Transverse colon (tissue), 4 donors: ENCODE measurements at regions of chr20 and their contacts with region 1.

Region 1: DNA sequence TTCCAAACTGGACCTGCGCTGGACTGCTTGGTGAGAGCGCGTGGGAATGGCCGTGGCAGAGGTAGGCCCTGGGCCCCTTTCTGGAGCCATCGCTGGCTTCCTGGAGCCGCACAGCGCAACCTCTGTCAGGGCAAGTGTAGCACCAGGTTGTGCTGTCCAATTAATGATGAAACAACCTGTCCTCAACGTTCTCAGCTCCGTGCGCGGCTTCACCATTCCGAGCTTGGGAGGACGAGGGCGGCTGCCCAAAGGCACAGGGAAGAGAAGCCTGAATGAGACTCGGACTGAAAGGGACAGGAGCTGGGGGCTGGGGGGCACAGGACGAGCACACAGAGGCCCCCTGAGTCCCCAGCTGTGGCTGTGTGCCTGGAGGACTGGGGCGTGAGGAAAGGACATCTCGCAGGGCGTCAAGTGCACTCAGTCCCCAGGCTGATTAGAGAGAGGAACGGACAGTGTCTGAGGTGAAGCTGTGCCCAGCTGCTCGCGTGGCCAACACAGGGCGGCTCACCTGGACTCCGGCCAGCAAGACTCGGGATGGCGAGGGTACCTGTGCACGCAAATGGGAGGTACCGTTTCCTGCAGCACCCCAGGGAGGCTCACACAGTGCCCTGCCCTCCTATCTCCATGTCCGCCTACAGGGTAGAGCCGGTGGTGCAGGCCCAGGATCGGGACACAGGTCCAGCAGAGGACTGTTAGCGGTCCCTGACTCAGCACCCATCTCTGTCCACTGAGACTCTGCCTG is 403.3 kb downstream of the TAF4 start:
- DNase-seq: no peak
- H3K4me3 ChIP-seq: no peak overlapping the region
- H3K27ac ChIP-seq: no peak overlapping the region
- H3K4me1 ChIP-seq: no peaks in the 10 kb centered on the region
- H3K27me3 ChIP-seq: no peaks in the 10 kb centered on the region
- CTCF ChIP-seq: no peak
- EP300 ChIP-seq: no peak
- POLR2A ChIP-seq: no peak

Region 2: GRCh38 chr20:61608041-61608835 is 54.2 kb before region 1 on chr20:
- in situ Hi-C with region 1: loop called in 1 of 4 experiments (anchors 10 kb)
- intact Hi-C with region 1: no loop called
- DNase-seq: no peak
- H3K4me3 ChIP-seq: no peak overlapping the region
- H3K27ac ChIP-seq: no peak overlapping the region
- H3K4me1 ChIP-seq: no peaks in the 10 kb centered on the region
- H3K27me3 ChIP-seq: peaks cover 5% of the 10 kb centered on the region
- CTCF ChIP-seq: no peak
- EP300 ChIP-seq: no peak
- POLR2A ChIP-seq: no peak